K562 (cell line): ENCODE measurements at regions of chr3 and their contacts with region 1.

Region 1: GRCh38 chr3:49566312-49566711 is 12.0 kb downstream of the BSN start:
- DNase-seq: peak in 1 of 4 experiments; percentile 23
- ATAC-seq: peak; percentile 44; the same call in 1 of the 3 replicates
- H3K4me3 ChIP-seq: no peak overlapping the region
- H3K27ac ChIP-seq: no peak overlapping the region
- H3K4me1 ChIP-seq: no peaks in the 10 kb centered on the region
- H3K27me3 ChIP-seq: no peaks in the 10 kb centered on the region
- CTCF ChIP-seq: peak; percentile 37 to 51 (median 40); a peak in 3 of 6 replicates
- EP300 ChIP-seq: no peak
- POLR2A ChIP-seq: no peak
- RAD21 ChIP-seq: peak in 1 of 2 experiments; percentile 60; a peak in 3 of 4 replicates

Region 2: DNA sequence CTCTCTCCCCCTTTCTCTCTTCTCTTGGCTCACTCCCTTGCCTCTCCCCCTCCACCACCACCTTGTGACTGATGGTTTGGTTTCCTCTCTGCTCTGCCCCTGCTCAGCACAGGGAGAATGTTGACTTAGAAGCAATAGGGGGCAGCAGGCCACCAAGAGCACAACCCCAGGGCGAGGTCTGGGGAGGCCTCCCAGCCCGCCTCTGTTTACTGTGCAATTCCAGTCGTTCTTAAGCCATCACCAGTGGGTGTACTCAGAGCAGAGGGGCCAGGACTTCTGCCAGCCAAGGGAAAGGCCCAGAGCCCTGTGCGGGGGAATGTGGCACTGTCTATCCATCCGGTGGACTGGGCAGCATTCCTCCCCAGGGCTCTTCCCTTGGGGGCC is 102.1 kb after region 1 on chr3:
- CTCF ChIA-PET with region 1: interaction called, 4 read pairs
- POLR2A ChIA-PET with region 1: no interaction called
- in situ Hi-C with region 1: loop called (anchors 10 kb)
- intact Hi-C with region 1: loop called (anchors 5 kb)
- DNase-seq: peak in 2 of 4 experiments; percentile 31 to 32
- ATAC-seq: peak; percentile 46
- H3K4me3 ChIP-seq: no peak overlapping the region
- H3K27ac ChIP-seq: no peak overlapping the region
- H3K4me1 ChIP-seq: peaks cover 11 to 12% of the 10 kb centered on the region in 2 experiments; a peak in 4 of 5 replicates
- H3K27me3 ChIP-seq: no peaks in the 10 kb centered on the region
- CTCF ChIP-seq: peak; percentile 10 to 28 (median 15); a peak in 2 of 6 replicates
- EP300 ChIP-seq: no peak
- POLR2A ChIP-seq: no peak
- RAD21 ChIP-seq: no peak

Region 3: GRCh38 chr3:49673715-49674496 is 107.6 kb after region 1 on chr3 and contains the start of gene APEH:
- CTCF ChIA-PET with region 1: interaction called, 4 read pairs
- POLR2A ChIA-PET with region 1: no interaction called
- in situ Hi-C with region 1: loop called (anchors 10 kb)
- intact Hi-C with region 1: loop called (anchors 5 kb)
- DNase-seq: peak; percentile 91 to 96 (median 94)
- ATAC-seq: peak; percentile 90
- H3K4me3 ChIP-seq: peak within 1 kb of the TSS; percentile 81
- H3K27ac ChIP-seq: peak within 1 kb of the TSS; percentile 94
- H3K4me1 ChIP-seq: peaks cover 17 to 38% of the 10 kb centered on the region in 2 experiments; a peak in 4 of 5 replicates
- H3K27me3 ChIP-seq: no peaks in the 10 kb centered on the region
- CTCF ChIP-seq: no peak
- EP300 ChIP-seq: no peak; the same call in 1 of the 2 replicates
- POLR2A ChIP-seq: peak; percentile 80
- RAD21 ChIP-seq: no peak
- polyA plus RNA-seq, gene APEH: 70.9 to 72.6 TPM